Endothelial cell of umbilical vein (primary cell): ENCODE measurements at regions of chr1 and their contacts with region 1.

Region 1: GRCh38 chr1:24688621-24689195 is 45.6 kb downstream of the SRRM1 start:
- DNase-seq: peak; percentile 70
- H3K4me3 ChIP-seq: no peak overlapping the region
- H3K27ac ChIP-seq: no peak overlapping the region
- H3K4me1 ChIP-seq: peaks cover 9% of the 10 kb centered on the region
- H3K27me3 ChIP-seq: no peaks in the 10 kb centered on the region
- CTCF ChIP-seq: peak; percentile 88 to 92
- POLR2A ChIP-seq: no peak

Region 2: DNA sequence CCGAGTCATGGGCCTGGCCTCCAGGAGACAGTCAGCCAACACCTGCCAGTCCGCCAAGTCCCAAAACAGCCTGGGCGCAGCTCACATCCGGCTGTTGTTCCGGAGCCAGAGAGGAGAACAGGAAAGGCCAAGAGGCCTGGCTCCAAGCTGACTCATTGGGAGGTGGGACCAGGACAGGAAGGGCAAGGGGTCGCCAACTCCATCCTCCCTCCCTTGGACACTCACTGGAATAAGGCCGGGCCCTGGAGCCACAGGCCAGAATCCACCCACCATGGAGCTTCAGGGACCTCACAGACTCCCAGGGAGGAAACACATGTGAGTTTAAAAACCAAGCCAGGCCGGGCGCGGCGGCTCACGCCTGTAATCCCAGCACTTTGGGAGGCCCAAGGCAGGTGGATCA is 31.4 kb after region 1 on chr1:
- CTCF ChIA-PET with region 1: interaction called, 28 read pairs
- POLR2A ChIA-PET with region 1: no interaction called
- dilution Hi-C with region 1: no loop called
- intact Hi-C with region 1: loop called (anchors 1 kb)
- DNase-seq: peak; percentile 96
- H3K4me3 ChIP-seq: no peak overlapping the region
- H3K27ac ChIP-seq: peak overlapping the region; percentile 85
- H3K4me1 ChIP-seq: peaks cover 27% of the 10 kb centered on the region
- H3K27me3 ChIP-seq: no peaks in the 10 kb centered on the region
- CTCF ChIP-seq: no peak
- POLR2A ChIP-seq: peak; percentile 65

Region 3: GRCh38 chr1:24744911-24745710 is 56.4 kb after region 1 on chr1 and contains the start of gene CLIC4:
- CTCF ChIA-PET with region 1: interaction called, 90 read pairs
- POLR2A ChIA-PET with region 1: interaction called, 34 read pairs
- dilution Hi-C with region 1: no loop called
- intact Hi-C with region 1: loop called (anchors 1 kb)
- DNase-seq: peak; percentile 100
- H3K4me3 ChIP-seq: peak within 1 kb of the TSS; percentile 75 to 96 (median 79)
- H3K27ac ChIP-seq: peak within 1 kb of the TSS; percentile 85
- H3K4me1 ChIP-seq: peaks cover 32% of the 10 kb centered on the region
- H3K27me3 ChIP-seq: no peaks in the 10 kb centered on the region
- CTCF ChIP-seq: no peak
- POLR2A ChIP-seq: peak; percentile 98
- total RNA-seq, gene CLIC4: 330 and 333 TPM in 2 replicates

Region 4: GRCh38 chr1:24769656-24770651 is 81.2 kb after region 1 on chr1:
- CTCF ChIA-PET with region 1: interaction called, 40 read pairs
- POLR2A ChIA-PET with region 1: no interaction called
- dilution Hi-C with region 1: no loop called
- intact Hi-C with region 1: no loop called
- DNase-seq: peak; percentile 92
- H3K4me3 ChIP-seq: no peak overlapping the region
- H3K27ac ChIP-seq: peak overlapping the region; percentile 96
- H3K4me1 ChIP-seq: peaks cover 54% of the 10 kb centered on the region
- H3K27me3 ChIP-seq: no peaks in the 10 kb centered on the region
- CTCF ChIP-seq: no peak
- POLR2A ChIP-seq: peak; percentile 52

Region 5: GRCh38 chr1:24786191-24786590 is 97.5 kb after region 1 on chr1:
- CTCF ChIA-PET with region 1: interaction called, 10 read pairs
- POLR2A ChIA-PET with region 1: no interaction called
- dilution Hi-C with region 1: no loop called
- intact Hi-C with region 1: no loop called
- DNase-seq: no peak
- H3K4me3 ChIP-seq: no peak overlapping the region
- H3K27ac ChIP-seq: no peak overlapping the region
- H3K4me1 ChIP-seq: no peaks in the 10 kb centered on the region
- H3K27me3 ChIP-seq: no peaks in the 10 kb centered on the region
- CTCF ChIP-seq: no peak
- POLR2A ChIP-seq: no peak

Region 6: DNA sequence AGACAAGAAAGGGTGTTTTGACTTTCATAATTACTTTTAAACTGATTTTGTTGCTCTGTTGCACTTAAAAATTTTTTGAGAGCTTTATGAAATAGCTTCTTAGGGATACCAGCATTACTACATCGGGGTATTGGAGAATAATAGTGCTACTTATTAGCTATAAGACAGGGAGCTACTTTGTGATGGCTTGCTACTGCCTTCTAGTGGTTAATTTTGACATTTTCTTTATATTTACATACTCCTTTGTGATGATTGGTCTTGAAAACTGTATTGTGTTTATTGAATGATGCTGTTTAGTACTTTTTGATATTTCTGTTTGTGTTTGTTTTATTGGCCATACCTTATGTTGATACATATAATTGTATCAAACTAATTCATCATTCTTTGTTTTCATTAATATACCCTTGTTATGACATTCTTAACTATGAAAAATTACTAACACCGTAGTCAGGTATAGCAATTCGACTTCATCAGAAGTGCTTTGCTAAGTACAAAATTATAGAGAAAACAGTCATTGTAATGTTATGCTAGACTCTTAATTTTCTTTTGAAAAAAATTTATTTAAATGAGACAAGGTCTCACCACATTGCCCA is 142.1 kb after region 1 on chr1:
- CTCF ChIA-PET with region 1: interaction called, 283 read pairs
- POLR2A ChIA-PET with region 1: interaction called, 5 read pairs
- dilution Hi-C with region 1: no loop called
- intact Hi-C with region 1: loop called (anchors 2 kb)
- DNase-seq: peak; percentile 90
- H3K4me3 ChIP-seq: no peak overlapping the region
- H3K27ac ChIP-seq: no peak overlapping the region
- H3K4me1 ChIP-seq: peaks cover 30% of the 10 kb centered on the region
- H3K27me3 ChIP-seq: no peaks in the 10 kb centered on the region
- CTCF ChIP-seq: peak; percentile 42 to 45
- POLR2A ChIP-seq: no peak